H1 (cell line): ENCODE measurements at regions of chr16 and their contacts with region 1.

Region 1: GRCh38 chr16:22109258-22109898 is 17.0 kb downstream of the VWA3A start:
- DNase-seq: no peak
- H3K4me3 ChIP-seq: no peak overlapping the region
- H3K27ac ChIP-seq: no peak overlapping the region
- H3K4me1 ChIP-seq: peaks cover 0 to under 1% (median 0%) of the 10 kb centered on the region in 4 experiments; a peak in 1 of 7 replicates
- H3K27me3 ChIP-seq: no peaks in the 10 kb centered on the region
- CTCF ChIP-seq: no peak
- EP300 ChIP-seq: no peak
- POLR2A ChIP-seq: no peak
- RAD21 ChIP-seq: no peak

Region 2: GRCh38 chr16:21937336-21937829 is 172.0 kb before region 1 on chr16:
- CTCF ChIA-PET with region 1: no interaction called
- POLR2A ChIA-PET with region 1: no interaction called
- DNase-seq: no peak
- H3K4me3 ChIP-seq: no peak overlapping the region
- H3K27ac ChIP-seq: no peak overlapping the region
- H3K4me1 ChIP-seq: no peaks in the 10 kb centered on the region
- H3K27me3 ChIP-seq: no peaks in the 10 kb centered on the region
- CTCF ChIP-seq: no peak
- EP300 ChIP-seq: no peak
- POLR2A ChIP-seq: no peak
- RAD21 ChIP-seq: no peak

Region 3: DNA sequence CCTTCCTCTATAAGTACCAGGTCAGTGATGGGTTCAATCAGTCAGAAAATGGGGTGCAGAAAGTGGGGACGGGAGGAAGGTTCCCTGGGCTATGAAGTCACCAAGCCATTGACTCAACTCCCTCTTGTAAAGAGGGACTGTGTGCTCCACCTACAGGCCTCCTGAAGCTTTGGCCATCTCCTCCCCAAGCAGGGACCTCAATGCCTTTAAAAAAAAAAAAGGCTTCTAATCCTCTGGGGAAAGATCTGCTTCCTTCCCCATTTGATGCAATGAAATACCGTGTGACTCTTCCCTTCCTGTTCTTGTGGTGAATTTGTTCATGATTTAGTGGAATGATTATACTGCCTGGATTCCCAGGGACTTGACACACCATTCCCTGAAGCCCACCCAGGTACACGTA is 13.8 kb after region 1 on chr16:
- CTCF ChIA-PET with region 1: interaction called, 18 read pairs
- POLR2A ChIA-PET with region 1: no interaction called
- DNase-seq: no peak
- H3K4me3 ChIP-seq: no peak overlapping the region
- H3K27ac ChIP-seq: no peak overlapping the region
- H3K4me1 ChIP-seq: no peaks in the 10 kb centered on the region
- H3K27me3 ChIP-seq: no peaks in the 10 kb centered on the region
- CTCF ChIP-seq: peak in 2 of 3 experiments; percentile 26 to 49; a peak in 3 of 4 replicates
- EP300 ChIP-seq: no peak
- POLR2A ChIP-seq: no peak
- RAD21 ChIP-seq: peak; percentile 44 to 48; a peak in 3 of 4 replicates

Region 4: DNA sequence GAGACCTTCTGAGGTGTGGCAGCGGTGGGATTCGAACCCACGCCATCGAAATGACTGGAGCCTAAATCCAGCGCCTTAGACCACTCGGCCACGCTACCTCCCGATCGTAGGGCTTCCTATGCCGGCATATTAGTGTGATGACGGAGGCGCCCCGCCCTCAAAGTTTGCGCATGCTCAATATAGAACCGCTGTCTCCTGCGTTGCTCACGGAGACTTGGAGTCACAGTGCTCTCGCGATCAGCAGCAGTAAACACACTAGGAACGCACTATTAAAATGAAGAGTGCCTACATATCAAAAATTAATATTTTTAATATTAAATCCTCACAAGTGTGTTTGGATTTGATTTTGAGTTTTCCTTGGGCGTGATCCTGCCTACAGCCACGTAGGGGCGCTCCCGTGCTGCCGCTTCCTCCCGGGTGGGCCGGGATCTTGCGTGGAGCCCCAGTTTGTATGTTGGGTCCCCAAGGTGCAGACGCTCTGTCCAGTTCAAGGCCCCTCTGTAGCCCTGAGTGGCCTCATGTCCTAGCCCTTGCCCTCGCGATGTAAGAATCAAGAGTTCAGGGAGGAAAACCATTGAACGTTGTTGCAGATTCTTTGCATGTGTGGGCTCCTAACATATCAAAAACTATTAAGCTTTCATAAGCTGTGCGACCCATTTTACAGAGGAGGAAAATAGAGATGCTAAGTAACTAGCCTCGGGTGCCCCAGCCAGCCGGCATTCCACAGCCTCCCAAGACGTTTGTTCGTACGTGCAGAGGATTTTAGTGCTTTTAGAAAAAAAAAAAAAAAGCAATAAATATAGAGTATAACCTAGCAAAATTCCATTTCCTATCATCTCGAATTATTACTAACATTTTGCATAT is 86.5 kb after region 1 on chr16:
- CTCF ChIA-PET with region 1: no interaction called
- POLR2A ChIA-PET with region 1: no interaction called
- DNase-seq: peak; percentile 90 to 98
- H3K4me3 ChIP-seq: peak overlapping the region; percentile 42 to 92 (median 78)
- H3K27ac ChIP-seq: no peak overlapping the region
- H3K4me1 ChIP-seq: peaks cover 0 to 3% (median 0%) of the 10 kb centered on the region in 4 experiments; a peak in 3 of 7 replicates
- H3K27me3 ChIP-seq: no peaks in the 10 kb centered on the region
- CTCF ChIP-seq: peak; percentile 54 to 61 (median 56)
- EP300 ChIP-seq: no peak
- POLR2A ChIP-seq: no peak
- RAD21 ChIP-seq: peak; percentile 38 to 68; a peak in 3 of 4 replicates

Region 5: GRCh38 chr16:22250522-22250921 is 141.1 kb after region 1 on chr16:
- CTCF ChIA-PET with region 1: no interaction called
- POLR2A ChIA-PET with region 1: no interaction called
- DNase-seq: no peak
- H3K4me3 ChIP-seq: no peak overlapping the region
- H3K27ac ChIP-seq: no peak overlapping the region
- H3K4me1 ChIP-seq: no peaks in the 10 kb centered on the region
- H3K27me3 ChIP-seq: no peaks in the 10 kb centered on the region
- CTCF ChIP-seq: no peak
- EP300 ChIP-seq: no peak
- POLR2A ChIP-seq: no peak
- RAD21 ChIP-seq: no peak